PC-3 (cell line): ENCODE measurements at regions of chr20 and their contacts with region 1.

Region 1: GRCh38 chr20:51562332-51563155 is 20.0 kb upstream of the NFATC2 start:
- DNase-seq: peak; percentile 93
- ATAC-seq: peak; percentile 56
- H3K4me3 ChIP-seq: peak overlapping the region; percentile 77
- H3K27ac ChIP-seq: peak overlapping the region; percentile 60
- H3K4me1 ChIP-seq: peaks cover 31% of the 10 kb centered on the region
- H3K27me3 ChIP-seq: peaks cover 16% of the 10 kb centered on the region
- CTCF ChIP-seq: peak; percentile 54; the same call in 1 of the 2 replicates

Region 2: GRCh38 chr20:50980851-50981713 is 581.5 kb before region 1 on chr20:
- CTCF ChIA-PET with region 1: interaction called, 3 read pairs
- POLR2A ChIA-PET with region 1: interaction called, 13 read pairs
- intact Hi-C with region 1: no loop called
- DNase-seq: peak; percentile 94
- ATAC-seq: peak; percentile 27
- H3K4me3 ChIP-seq: peak overlapping the region; percentile 20; the same call in 1 of the 2 replicates
- H3K27ac ChIP-seq: peak overlapping the region; percentile 87
- H3K4me1 ChIP-seq: peaks cover 40% of the 10 kb centered on the region
- H3K27me3 ChIP-seq: no peaks in the 10 kb centered on the region
- CTCF ChIP-seq: peak; percentile 99

Region 3: GRCh38 chr20:51385646-51386530 is 176.7 kb before region 1 on chr20:
- CTCF ChIA-PET with region 1: interaction called, 3 read pairs
- POLR2A ChIA-PET with region 1: interaction called, 3 read pairs
- intact Hi-C with region 1: loop called (anchors 2 kb)
- DNase-seq: peak; percentile 74
- ATAC-seq: no peak
- H3K4me3 ChIP-seq: no peak overlapping the region
- H3K27ac ChIP-seq: no peak overlapping the region; the same call in 1 of the 2 replicates
- H3K4me1 ChIP-seq: peaks cover 64% of the 10 kb centered on the region
- H3K27me3 ChIP-seq: no peaks in the 10 kb centered on the region
- CTCF ChIP-seq: peak; percentile 95

Region 4: DNA sequence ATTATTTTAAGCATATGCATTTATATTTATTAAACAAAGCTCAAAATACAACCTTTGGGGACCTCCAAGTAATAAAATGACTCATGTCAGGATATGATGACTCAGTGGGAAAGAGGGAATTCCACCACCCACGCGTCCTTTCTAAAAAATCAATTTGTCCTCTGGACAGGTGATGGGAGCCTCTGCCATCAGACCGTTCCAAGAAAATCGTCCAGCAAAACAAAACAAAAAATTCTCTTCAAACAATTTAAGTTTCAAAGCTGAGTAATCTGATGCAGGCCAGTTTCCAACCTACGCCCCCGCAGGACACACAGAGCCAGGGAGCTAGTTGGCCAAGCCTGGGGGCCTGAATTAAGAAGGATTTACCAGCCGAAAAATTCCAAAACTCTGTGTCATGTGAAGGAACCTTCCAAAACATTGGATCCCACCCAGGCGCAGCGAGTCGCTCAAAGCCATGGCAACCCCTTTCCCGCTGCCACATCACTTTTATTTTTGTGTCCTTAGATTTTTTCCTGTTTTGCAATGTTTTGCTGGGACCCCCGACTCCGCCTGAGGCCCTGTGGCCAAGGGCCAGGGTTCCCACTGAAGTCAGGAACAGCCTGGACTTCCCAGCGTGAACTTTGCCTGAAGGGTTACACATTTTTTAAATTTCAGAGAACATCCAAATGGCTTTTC is 115.3 kb before region 1 on chr20:
- CTCF ChIA-PET with region 1: no interaction called
- POLR2A ChIA-PET with region 1: no interaction called
- intact Hi-C with region 1: loop called (anchors 2 kb)
- DNase-seq: peak; percentile 100
- ATAC-seq: peak; percentile 86
- H3K4me3 ChIP-seq: peak overlapping the region; percentile 51
- H3K27ac ChIP-seq: peak overlapping the region; percentile 80
- H3K4me1 ChIP-seq: peaks cover 30% of the 10 kb centered on the region
- H3K27me3 ChIP-seq: no peaks in the 10 kb centered on the region
- CTCF ChIP-seq: no peak

Region 5: GRCh38 chr20:51456511-51457509 is 105.7 kb before region 1 on chr20:
- CTCF ChIA-PET with region 1: no interaction called
- POLR2A ChIA-PET with region 1: interaction called, 4 read pairs
- intact Hi-C with region 1: loop called (anchors 2 kb)
- DNase-seq: peak; percentile 100
- ATAC-seq: peak; percentile 87
- H3K4me3 ChIP-seq: peak overlapping the region; percentile 55
- H3K27ac ChIP-seq: peak overlapping the region; percentile 91
- H3K4me1 ChIP-seq: peaks cover 24% of the 10 kb centered on the region
- H3K27me3 ChIP-seq: no peaks in the 10 kb centered on the region
- CTCF ChIP-seq: no peak

Region 6: GRCh38 chr20:51624157-51624731 is 61.7 kb after region 1 on chr20:
- CTCF ChIA-PET with region 1: no interaction called
- POLR2A ChIA-PET with region 1: interaction called, 3 read pairs
- intact Hi-C with region 1: loop called (anchors 5 kb)
- DNase-seq: peak; percentile 94
- ATAC-seq: peak; percentile 52
- H3K4me3 ChIP-seq: no peak overlapping the region
- H3K27ac ChIP-seq: peak overlapping the region; percentile 27
- H3K4me1 ChIP-seq: peaks cover 20% of the 10 kb centered on the region
- H3K27me3 ChIP-seq: no peaks in the 10 kb centered on the region
- CTCF ChIP-seq: peak; percentile 97

Region 7: DNA sequence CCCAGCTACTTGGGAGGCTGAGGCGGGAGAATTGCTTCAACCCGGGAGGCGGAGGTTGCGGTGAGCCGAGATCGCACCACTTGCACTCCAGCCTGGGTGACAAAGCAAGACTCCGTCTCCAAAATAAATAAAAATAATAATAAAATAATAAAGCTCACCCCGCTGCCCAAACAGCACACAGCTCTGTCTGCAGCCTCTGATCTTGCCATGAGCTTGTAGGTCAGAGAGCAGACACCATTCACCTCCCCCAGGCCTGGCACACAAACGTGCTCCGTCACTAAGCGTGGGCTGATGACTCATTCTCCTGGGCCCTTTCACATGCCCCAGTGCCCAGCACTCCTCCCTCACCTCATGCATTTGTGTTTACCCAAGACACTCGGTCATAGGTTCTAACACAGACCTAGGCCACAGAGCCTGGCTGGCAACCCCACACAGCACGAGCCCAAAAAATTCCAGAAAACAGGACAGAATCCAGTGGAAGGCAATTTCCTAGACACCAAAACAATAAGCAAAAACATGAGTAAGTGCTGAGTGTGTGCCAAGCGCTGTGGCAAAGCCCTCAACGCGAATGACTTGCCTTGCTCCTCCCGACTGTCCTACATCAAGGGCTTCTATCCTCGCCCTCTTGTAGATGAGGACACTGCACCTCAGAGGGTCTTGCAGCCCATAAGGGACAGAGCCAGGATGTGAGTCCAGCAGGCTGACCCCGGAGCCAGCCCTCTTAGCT is 187.7 kb after region 1 on chr20:
- CTCF ChIA-PET with region 1: no interaction called
- POLR2A ChIA-PET with region 1: no interaction called
- intact Hi-C with region 1: loop called (anchors 5 kb)
- DNase-seq: peak; percentile 100
- ATAC-seq: peak; percentile 87
- H3K4me3 ChIP-seq: peak overlapping the region; percentile 31; the same call in 1 of the 2 replicates
- H3K27ac ChIP-seq: peak overlapping the region; percentile 87
- H3K4me1 ChIP-seq: peaks cover 58% of the 10 kb centered on the region
- H3K27me3 ChIP-seq: no peaks in the 10 kb centered on the region
- CTCF ChIP-seq: no peak

Region 8: DNA sequence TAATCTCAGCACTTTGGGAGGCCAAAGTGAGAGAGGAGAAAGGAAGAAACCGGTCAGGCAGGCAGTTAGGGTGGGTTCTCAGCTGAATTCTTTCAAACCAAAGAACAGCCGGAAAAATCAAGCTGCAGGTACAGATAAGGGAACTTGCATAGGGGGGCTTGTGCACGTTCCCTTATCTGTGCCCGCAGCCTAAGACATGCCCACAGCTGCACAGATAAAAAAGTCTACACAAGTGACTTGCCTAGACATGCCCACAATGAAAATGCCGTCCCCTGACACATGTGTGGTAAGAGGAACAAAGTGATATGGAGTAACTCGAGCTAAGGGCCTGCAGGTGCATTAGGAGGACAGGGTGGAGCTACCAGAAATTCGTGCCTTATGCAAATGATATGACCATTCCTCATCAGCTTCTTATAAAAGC is 415.5 kb after region 1 on chr20:
- CTCF ChIA-PET with region 1: no interaction called
- POLR2A ChIA-PET with region 1: no interaction called
- intact Hi-C with region 1: no loop called
- DNase-seq: no peak
- ATAC-seq: no peak
- H3K4me3 ChIP-seq: no peak overlapping the region
- H3K27ac ChIP-seq: no peak overlapping the region
- H3K4me1 ChIP-seq: no peaks in the 10 kb centered on the region
- H3K27me3 ChIP-seq: no peaks in the 10 kb centered on the region
- CTCF ChIP-seq: no peak